Right cardiac atrium (tissue), 5 donors: ENCODE measurements at regions of chr9 and their contacts with region 1.

Region 1: DNA sequence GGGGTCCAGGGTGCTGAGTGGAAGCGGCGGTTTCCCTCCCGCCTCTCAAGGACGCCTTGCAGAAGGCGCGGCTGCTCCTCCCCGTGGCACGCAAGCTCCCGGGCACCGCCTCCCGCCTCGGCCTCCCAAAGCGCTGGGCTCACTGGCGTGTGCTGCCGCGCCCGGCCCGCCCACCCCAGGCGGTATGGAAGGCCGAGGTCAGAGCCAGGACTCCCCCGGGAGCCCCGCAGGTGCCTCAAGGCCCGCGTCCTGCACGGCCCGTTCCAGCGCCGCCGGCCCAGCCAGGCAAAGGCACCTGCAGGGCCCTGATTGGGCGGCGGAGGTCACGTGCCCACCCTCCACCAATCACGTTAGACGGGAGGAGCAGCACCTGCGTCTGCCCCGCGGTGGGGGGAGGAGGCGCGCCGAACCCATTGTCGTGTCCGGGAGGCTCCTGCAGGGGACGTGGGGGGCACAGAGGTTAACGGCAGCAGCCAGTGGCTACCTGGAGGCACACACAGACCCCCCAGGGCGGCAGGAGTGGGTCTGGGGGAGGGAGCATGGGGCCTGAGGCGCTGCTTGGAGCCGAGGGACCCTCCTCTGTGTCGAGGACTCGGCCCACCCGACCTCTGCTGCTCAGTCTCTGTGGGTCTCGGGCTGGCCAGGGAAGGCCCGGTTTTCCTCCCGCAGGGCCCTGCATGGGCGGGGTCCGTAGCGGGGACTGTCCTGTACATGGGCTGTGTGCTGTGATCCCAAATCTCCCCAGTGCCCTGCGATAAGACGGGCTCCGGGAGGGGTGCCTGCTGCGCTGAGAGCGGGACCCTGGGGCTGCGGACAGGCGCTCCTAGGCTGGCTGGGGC is 2.0 kb upstream of the LCN12 start:
- DNase-seq: peak; percentile 93 to 98 (median 97)
- ATAC-seq: peak; percentile 85
- H3K4me3 ChIP-seq: peak overlapping the region; percentile 52
- H3K27ac ChIP-seq: peak overlapping the region; percentile 59
- H3K4me1 ChIP-seq: no peaks in the 10 kb centered on the region
- H3K27me3 ChIP-seq: no peaks in the 10 kb centered on the region

Region 2: GRCh38 chr9:136807281-136808074 is 142.6 kb before region 1 on chr9 and contains the start of gene RABL6:
- intact Hi-C with region 1: no loop called
- DNase-seq: peak; percentile 80 to 94 (median 93)
- ATAC-seq: peak; percentile 88 to 89
- H3K4me3 ChIP-seq: peak within 1 kb of the TSS; percentile 97
- H3K27ac ChIP-seq: peak within 1 kb of the TSS; percentile 93
- H3K4me1 ChIP-seq: no peaks in the 10 kb centered on the region
- H3K27me3 ChIP-seq: no peaks in the 10 kb centered on the region
- total RNA-seq, gene RABL6: 67.3 to 73.6 (median 71.6) TPM

Region 3: DNA sequence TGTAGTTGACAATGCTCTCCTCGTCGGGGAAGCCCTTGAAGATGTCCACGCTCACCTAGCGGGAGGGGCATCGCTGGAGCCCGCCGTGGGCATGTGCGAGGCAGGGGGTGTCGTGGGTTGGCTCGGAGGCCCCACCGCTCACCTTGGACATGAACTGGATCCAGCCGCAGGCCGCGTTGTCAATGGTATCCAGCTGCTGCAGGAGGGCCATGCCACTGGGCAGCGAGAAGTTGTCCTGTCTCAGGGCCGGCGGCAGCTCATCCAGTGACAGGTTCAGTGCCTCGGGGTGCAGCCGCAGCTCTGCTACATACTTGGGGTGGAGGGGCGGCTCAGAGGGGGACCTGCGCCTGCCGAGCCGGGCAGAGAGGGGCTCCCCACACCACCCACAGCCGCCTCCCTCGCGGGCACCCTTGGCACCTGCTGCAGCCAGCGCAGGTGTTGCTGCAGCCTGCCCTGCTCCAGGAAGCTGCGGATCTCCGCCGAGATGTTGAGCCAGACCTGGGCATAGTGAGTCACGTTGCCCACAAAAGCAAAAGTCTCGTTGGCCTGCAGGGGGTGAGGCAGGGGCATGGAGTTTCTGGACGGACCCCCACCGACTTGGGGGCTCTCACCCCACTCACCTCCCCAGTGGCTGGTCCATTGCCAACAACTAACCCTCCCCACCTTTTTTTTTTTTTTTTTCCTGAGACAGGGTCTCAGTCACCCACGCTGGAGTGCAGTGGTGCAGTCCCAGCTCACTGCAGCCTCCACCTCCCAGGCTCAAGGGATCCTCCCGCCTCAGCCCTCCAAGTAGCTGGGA is 68.9 kb after region 1 on chr9:
- intact Hi-C with region 1: no loop called
- DNase-seq: no peak
- ATAC-seq: no peak
- H3K4me3 ChIP-seq: no peak overlapping the region
- H3K27ac ChIP-seq: no peak overlapping the region
- H3K4me1 ChIP-seq: no peaks in the 10 kb centered on the region
- H3K27me3 ChIP-seq: no peaks in the 10 kb centered on the region

Region 4: GRCh38 chr9:137029058-137029936 is 79.3 kb after region 1 on chr9:
- intact Hi-C with region 1: loop called in 3 of 4 experiments (anchors 5 to 10 kb)
- DNase-seq: peak; percentile 82 to 94 (median 93)
- ATAC-seq: peak; percentile 63 to 73
- H3K4me3 ChIP-seq: no peak overlapping the region
- H3K27ac ChIP-seq: no peak overlapping the region
- H3K4me1 ChIP-seq: no peaks in the 10 kb centered on the region
- H3K27me3 ChIP-seq: no peaks in the 10 kb centered on the region